ENCODE measurements at regions of chr15 and their contacts with region 1.

Region 1: GRCh38 chr15:99565299-99566156 is at the start of gene MEF2A:
- DNase-seq: peak; percentile 91
- H3K4me3 Mint-ChIP-seq: peak within 1 kb of the TSS; percentile 97
- H3K27ac Mint-ChIP-seq: peak within 1 kb of the TSS; percentile 91
- H3K4me1 Mint-ChIP-seq: peaks cover 26% of the 10 kb centered on the region
- H3K27me3 Mint-ChIP-seq: peaks cover 15% of the 10 kb centered on the region
- total RNA-seq, gene MEF2A: 24.6 to 24.8 TPM

Region 2: DNA sequence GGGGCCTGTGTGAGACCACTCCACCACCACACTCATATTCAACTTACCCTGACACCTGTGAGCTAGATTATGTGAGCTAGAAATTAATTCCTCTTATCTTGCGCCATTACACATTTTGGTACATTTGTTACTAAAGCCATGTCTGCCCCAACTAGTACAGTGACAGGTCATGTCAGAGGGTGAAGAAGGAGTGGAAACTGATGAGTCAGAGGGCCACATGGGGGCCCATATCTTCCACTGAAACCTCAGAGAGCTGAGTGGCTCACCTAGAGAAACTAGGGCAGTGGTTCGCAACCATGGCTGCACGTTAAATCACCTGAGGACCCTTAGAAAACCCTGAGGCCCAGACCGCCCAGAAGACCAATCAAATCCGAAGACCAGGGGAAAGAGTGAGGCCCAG is 15.5 kb before region 1 on chr15:
- CTCF ChIA-PET with region 1: interaction called, 3 read pairs
- POLR2A ChIA-PET with region 1: interaction called, 14 read pairs
- DNase-seq: no peak
- H3K4me3 Mint-ChIP-seq: no peak overlapping the region
- H3K27ac Mint-ChIP-seq: no peak overlapping the region
- H3K4me1 Mint-ChIP-seq: peaks cover 5% of the 10 kb centered on the region
- H3K27me3 Mint-ChIP-seq: no peaks in the 10 kb centered on the region